ENCODE measurements at regions of chr1 and their contacts with region 1.

Region 1: GRCh38 chr1:116586741-116587143 is 15.9 kb upstream of the CD58 start:
- DNase-seq: no peak
- ATAC-seq: no peak
- H3K4me3 ChIP-seq: no peak overlapping the region
- H3K27ac ChIP-seq: no peak overlapping the region
- H3K4me1 ChIP-seq: peaks cover 0 to 6% of the 10 kb centered on the region in 2 experiments; a peak in 1 of 5 replicates
- H3K27me3 ChIP-seq: no peaks in the 10 kb centered on the region
- CTCF ChIP-seq: no peak
- EP300 ChIP-seq: no peak
- POLR2A ChIP-seq: no peak
- RAD21 ChIP-seq: no peak

Region 2: GRCh38 chr1:116133696-116134650 is 452.8 kb before region 1 on chr1:
- CTCF ChIA-PET with region 1: no interaction called
- POLR2A ChIA-PET with region 1: no interaction called
- in situ Hi-C with region 1: no loop called
- intact Hi-C with region 1: loop called (anchors 10 kb)
- DNase-seq: peak in 2 of 4 experiments; percentile 37
- ATAC-seq: peak; percentile 37; the same call in 2 of the 3 replicates
- H3K4me3 ChIP-seq: no peak overlapping the region
- H3K27ac ChIP-seq: no peak overlapping the region
- H3K4me1 ChIP-seq: peaks cover 6 to 8% of the 10 kb centered on the region in 2 experiments; a peak in 3 of 5 replicates
- H3K27me3 ChIP-seq: peaks cover 8% of the 10 kb centered on the region in 2 experiments; a peak in 4 of 5 replicates
- CTCF ChIP-seq: peak; percentile 46 to 61 (median 52)
- EP300 ChIP-seq: no peak
- POLR2A ChIP-seq: no peak
- RAD21 ChIP-seq: peak; percentile 15 to 57; a peak in 2 of 4 replicates

Measured in K562 (cell line).